ENCODE measurements at regions of chr6 and their contacts with region 1.

Region 1: GRCh38 chr6:90478789-90479602 is 107.9 kb downstream of the MAP3K7 start:
- DNase-seq: peak; percentile 95
- ATAC-seq: peak; percentile 99
- H3K4me3 ChIP-seq: no peak overlapping the region
- H3K27ac ChIP-seq: no peak overlapping the region
- H3K4me1 ChIP-seq: no peaks in the 10 kb centered on the region; the same call in 1 of the 2 replicates
- H3K27me3 ChIP-seq: peaks cover 5% of the 10 kb centered on the region; the same call in 1 of the 2 replicates
- CTCF ChIP-seq: peak; percentile 98
- POLR2A ChIP-seq: peak; percentile 62
- RAD21 ChIP-seq: peak; percentile 100

Region 2: GRCh38 chr6:89940225-89941027 is 538.6 kb before region 1 on chr6:
- CTCF ChIA-PET with region 1: interaction called, 27 read pairs
- POLR2A ChIA-PET with region 1: no interaction called
- dilution Hi-C with region 1: no loop called
- in situ Hi-C with region 1: loop called (anchors 5 kb)
- intact Hi-C with region 1: loop called (anchors 1 kb)
- DNase-seq: peak; percentile 86
- ATAC-seq: peak; percentile 99
- H3K4me3 ChIP-seq: no peak overlapping the region
- H3K27ac ChIP-seq: no peak overlapping the region
- H3K4me1 ChIP-seq: no peaks in the 10 kb centered on the region; the same call in 1 of the 2 replicates
- H3K27me3 ChIP-seq: no peaks in the 10 kb centered on the region
- CTCF ChIP-seq: peak; percentile 92
- POLR2A ChIP-seq: no peak
- RAD21 ChIP-seq: peak; percentile 97

Region 3: GRCh38 chr6:90179190-90180169 is 299.5 kb before region 1 on chr6:
- CTCF ChIA-PET with region 1: no interaction called
- POLR2A ChIA-PET with region 1: no interaction called
- dilution Hi-C with region 1: no loop called
- in situ Hi-C with region 1: no loop called
- intact Hi-C with region 1: loop called (anchors 2 kb)
- DNase-seq: no peak
- ATAC-seq: no peak
- H3K4me3 ChIP-seq: no peak overlapping the region
- H3K27ac ChIP-seq: no peak overlapping the region
- H3K4me1 ChIP-seq: peaks cover 10% of the 10 kb centered on the region
- H3K27me3 ChIP-seq: no peaks in the 10 kb centered on the region; the same call in none of the 2 replicates
- CTCF ChIP-seq: peak; percentile 43
- POLR2A ChIP-seq: no peak
- RAD21 ChIP-seq: peak; percentile 27; the same call in 1 of the 2 replicates

Region 4: DNA sequence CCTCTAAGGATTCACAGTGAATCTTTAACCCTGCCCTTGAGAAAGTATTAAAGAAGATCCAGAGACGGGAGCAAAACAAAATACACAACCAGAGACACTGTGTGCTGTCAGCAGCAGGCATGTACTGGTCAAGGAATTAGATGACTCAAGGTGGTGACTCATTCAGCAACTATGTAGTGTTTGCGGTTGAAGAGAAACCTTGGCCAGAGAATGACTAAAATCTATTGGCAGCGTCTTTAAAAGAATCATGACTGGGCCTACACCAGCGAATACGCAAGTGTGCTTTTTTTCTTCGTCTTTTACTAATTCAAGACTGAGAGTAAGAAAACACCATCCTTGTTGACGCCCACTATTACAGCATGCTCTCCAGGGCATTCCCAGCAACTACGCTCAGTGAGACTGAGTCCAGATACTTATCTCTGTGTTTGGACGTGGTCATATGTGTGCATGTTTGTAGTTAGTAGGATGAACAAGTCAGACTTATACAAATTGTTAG is 109.9 kb before region 1 on chr6:
- CTCF ChIA-PET with region 1: no interaction called
- POLR2A ChIA-PET with region 1: no interaction called
- dilution Hi-C with region 1: no loop called
- in situ Hi-C with region 1: no loop called
- intact Hi-C with region 1: no loop called
- DNase-seq: peak; percentile 100
- ATAC-seq: peak; percentile 97
- H3K4me3 ChIP-seq: no peak overlapping the region
- H3K27ac ChIP-seq: no peak overlapping the region
- H3K4me1 ChIP-seq: peaks cover 3% of the 10 kb centered on the region
- H3K27me3 ChIP-seq: no peaks in the 10 kb centered on the region
- CTCF ChIP-seq: no peak
- POLR2A ChIP-seq: no peak
- RAD21 ChIP-seq: no peak

Region 5: GRCh38 chr6:90393232-90393884 is 85.6 kb before region 1 on chr6:
- CTCF ChIA-PET with region 1: no interaction called
- POLR2A ChIA-PET with region 1: no interaction called
- dilution Hi-C with region 1: no loop called
- in situ Hi-C with region 1: no loop called
- intact Hi-C with region 1: loop called (anchors 1 kb)
- DNase-seq: peak; percentile 71
- ATAC-seq: peak; percentile 93
- H3K4me3 ChIP-seq: no peak overlapping the region
- H3K27ac ChIP-seq: no peak overlapping the region
- H3K4me1 ChIP-seq: no peaks in the 10 kb centered on the region
- H3K27me3 ChIP-seq: peaks cover 20% of the 10 kb centered on the region
- CTCF ChIP-seq: peak; percentile 81
- POLR2A ChIP-seq: no peak
- RAD21 ChIP-seq: peak; percentile 91

Region 6: DNA sequence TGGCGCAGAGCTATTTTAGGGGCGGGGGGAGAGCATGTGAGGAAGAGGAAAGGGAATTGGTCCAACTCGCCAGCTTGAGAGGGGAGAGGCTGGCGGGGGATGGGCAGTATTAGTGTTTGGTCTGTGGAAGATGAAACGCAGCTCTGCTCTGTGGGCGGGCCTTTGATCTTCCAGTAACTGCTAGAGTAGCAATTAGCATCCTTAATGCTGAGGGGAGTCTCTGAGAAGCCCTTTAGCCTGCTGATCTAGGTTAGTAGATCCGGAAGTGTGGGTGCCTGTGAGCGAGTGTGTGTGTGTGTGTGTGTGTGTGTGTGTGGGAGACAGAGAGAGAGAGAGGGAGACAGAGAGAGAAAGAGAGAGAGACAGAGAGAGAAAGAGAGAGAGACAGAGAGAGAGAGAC is 65.1 kb before region 1 on chr6:
- CTCF ChIA-PET with region 1: no interaction called
- POLR2A ChIA-PET with region 1: no interaction called
- dilution Hi-C with region 1: no loop called
- in situ Hi-C with region 1: no loop called
- intact Hi-C with region 1: no loop called
- DNase-seq: peak; percentile 12
- ATAC-seq: peak; percentile 42; the same call in 1 of the 2 replicates
- H3K4me3 ChIP-seq: 0 out of 2 replicates have a peak overlapping the region, but pooled peaks have one; percentile 21
- H3K27ac ChIP-seq: no peak overlapping the region
- H3K4me1 ChIP-seq: peaks cover 3% of the 10 kb centered on the region; the same call in 1 of the 2 replicates
- H3K27me3 ChIP-seq: peaks cover 8% of the 10 kb centered on the region
- CTCF ChIP-seq: no peak
- POLR2A ChIP-seq: no peak
- RAD21 ChIP-seq: no peak